ENCODE measurements at regions of chr3 and their contacts with region 1.

Region 1: GRCh38 chr3:30199096-30199759 is 407.2 kb upstream of the TGFBR2 start:
- DNase-seq: peak; percentile 59 to 72
- H3K4me3 ChIP-seq: no peak overlapping the region
- H3K4me3 Mint-ChIP-seq: no peak overlapping the region
- H3K27ac Mint-ChIP-seq: no peak overlapping the region
- H3K4me1 ChIP-seq: peaks cover 34% of the 10 kb centered on the region
- H3K4me1 Mint-ChIP-seq: peaks cover 19% of the 10 kb centered on the region
- H3K27me3 ChIP-seq: no peaks in the 10 kb centered on the region
- H3K27me3 Mint-ChIP-seq: no peaks in the 10 kb centered on the region
- CTCF ChIP-seq: peak; percentile 68 to 72

Region 2: GRCh38 chr3:30012941-30013543 is 186.2 kb before region 1 on chr3:
- CTCF ChIA-PET with region 1: interaction called, 8 read pairs
- POLR2A ChIA-PET with region 1: no interaction called
- intact Hi-C with region 1: loop called (anchors 1 kb)
- DNase-seq: peak; percentile 71 to 76
- H3K4me3 ChIP-seq: no peak overlapping the region
- H3K4me3 Mint-ChIP-seq: no peak overlapping the region
- H3K27ac Mint-ChIP-seq: no peak overlapping the region
- H3K4me1 ChIP-seq: no peaks in the 10 kb centered on the region
- H3K4me1 Mint-ChIP-seq: no peaks in the 10 kb centered on the region
- H3K27me3 ChIP-seq: no peaks in the 10 kb centered on the region
- H3K27me3 Mint-ChIP-seq: no peaks in the 10 kb centered on the region
- CTCF ChIP-seq: peak; percentile 64 to 66

Region 3: GRCh38 chr3:30042274-30042859 is 156.9 kb before region 1 on chr3:
- CTCF ChIA-PET with region 1: interaction called, 65 read pairs
- POLR2A ChIA-PET with region 1: interaction called, 3 read pairs
- intact Hi-C with region 1: loop called (anchors 1 kb)
- DNase-seq: peak; percentile 69 to 72
- H3K4me3 ChIP-seq: no peak overlapping the region
- H3K4me3 Mint-ChIP-seq: no peak overlapping the region
- H3K27ac Mint-ChIP-seq: no peak overlapping the region
- H3K4me1 ChIP-seq: peaks cover 10% of the 10 kb centered on the region; the same call in 1 of the 2 replicates
- H3K4me1 Mint-ChIP-seq: no peaks in the 10 kb centered on the region
- H3K27me3 ChIP-seq: no peaks in the 10 kb centered on the region
- H3K27me3 Mint-ChIP-seq: no peaks in the 10 kb centered on the region
- CTCF ChIP-seq: peak; percentile 76 to 86

Region 4: DNA sequence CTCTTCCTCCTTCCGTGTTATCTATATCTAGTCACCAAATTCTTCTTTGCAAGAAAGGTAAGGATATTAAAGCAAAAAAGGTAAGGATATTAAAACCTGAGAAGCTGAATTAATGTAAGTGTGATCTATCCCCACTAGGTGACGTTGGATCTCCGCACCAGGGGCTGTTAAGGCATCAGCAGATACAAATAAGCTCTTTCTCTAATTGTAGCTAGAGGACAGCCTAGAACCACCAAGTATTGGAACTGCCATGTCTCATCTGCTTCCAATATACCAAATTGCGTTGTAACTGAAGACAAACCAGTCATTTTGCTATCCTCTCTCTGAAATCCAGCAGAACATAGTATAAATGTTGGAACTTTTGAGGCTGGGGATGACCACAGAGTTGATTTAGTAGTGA is 64.0 kb before region 1 on chr3:
- CTCF ChIA-PET with region 1: interaction called, 13 read pairs
- POLR2A ChIA-PET with region 1: no interaction called
- intact Hi-C with region 1: loop called (anchors 2 kb)
- DNase-seq: peak in 1 of 2 experiments; percentile 13
- H3K4me3 ChIP-seq: no peak overlapping the region
- H3K4me3 Mint-ChIP-seq: no peak overlapping the region
- H3K27ac Mint-ChIP-seq: no peak overlapping the region
- H3K4me1 ChIP-seq: no peaks in the 10 kb centered on the region
- H3K4me1 Mint-ChIP-seq: no peaks in the 10 kb centered on the region
- H3K27me3 ChIP-seq: no peaks in the 10 kb centered on the region
- H3K27me3 Mint-ChIP-seq: no peaks in the 10 kb centered on the region
- CTCF ChIP-seq: peak in 1 of 2 experiments; percentile 24

Measured in Caco-2 (cell line).